CD4-positive, alpha-beta T cell (primary cell): ENCODE measurements at regions of chr9 and their contacts with region 1.

Region 1: GRCh38 chr9:128081056-128081455 is 13.0 kb downstream of the SLC25A25 start:
- DNase-seq: no peak
- ATAC-seq: no peak
- H3K4me3 ChIP-seq: no peak overlapping the region
- H3K4me3 Mint-ChIP-seq: no peak overlapping the region
- H3K27ac ChIP-seq: no peak overlapping the region
- H3K27ac Mint-ChIP-seq: peak overlapping the region; percentile 67
- H3K4me1 ChIP-seq: peaks cover 47% of the 10 kb centered on the region
- H3K4me1 Mint-ChIP-seq: peaks cover 57% of the 10 kb centered on the region
- H3K27me3 ChIP-seq: no peaks in the 10 kb centered on the region
- H3K27me3 Mint-ChIP-seq: no peaks in the 10 kb centered on the region
- CTCF ChIP-seq: no peak

Region 2: GRCh38 chr9:128043467-128043868 is 37.6 kb before region 1 on chr9:
- CTCF ChIA-PET with region 1: interaction called, 3 read pairs
- POLR2A ChIA-PET with region 1: interaction called, 3 read pairs
- intact Hi-C with region 1: loop called in 1 of 2 experiments (anchors 5 kb)
- DNase-seq: no peak
- ATAC-seq: no peak
- H3K4me3 ChIP-seq: no peak overlapping the region
- H3K4me3 Mint-ChIP-seq: no peak overlapping the region
- H3K27ac ChIP-seq: no peak overlapping the region
- H3K27ac Mint-ChIP-seq: no peak overlapping the region
- H3K4me1 ChIP-seq: no peaks in the 10 kb centered on the region
- H3K4me1 Mint-ChIP-seq: peaks cover 1% of the 10 kb centered on the region
- H3K27me3 ChIP-seq: no peaks in the 10 kb centered on the region
- H3K27me3 Mint-ChIP-seq: no peaks in the 10 kb centered on the region
- CTCF ChIP-seq: no peak